ENCODE measurements at regions of chr2 and their contacts with region 1.

Region 1: GRCh38 chr2:128531856-128532255 is 213.2 kb upstream of the HS6ST1 start:
- DNase-seq: no peak
- ATAC-seq: no peak
- H3K4me3 ChIP-seq: no peak overlapping the region
- H3K27ac ChIP-seq: no peak overlapping the region
- H3K4me1 ChIP-seq: no peaks in the 10 kb centered on the region
- H3K27me3 ChIP-seq: no peaks in the 10 kb centered on the region

Region 2: DNA sequence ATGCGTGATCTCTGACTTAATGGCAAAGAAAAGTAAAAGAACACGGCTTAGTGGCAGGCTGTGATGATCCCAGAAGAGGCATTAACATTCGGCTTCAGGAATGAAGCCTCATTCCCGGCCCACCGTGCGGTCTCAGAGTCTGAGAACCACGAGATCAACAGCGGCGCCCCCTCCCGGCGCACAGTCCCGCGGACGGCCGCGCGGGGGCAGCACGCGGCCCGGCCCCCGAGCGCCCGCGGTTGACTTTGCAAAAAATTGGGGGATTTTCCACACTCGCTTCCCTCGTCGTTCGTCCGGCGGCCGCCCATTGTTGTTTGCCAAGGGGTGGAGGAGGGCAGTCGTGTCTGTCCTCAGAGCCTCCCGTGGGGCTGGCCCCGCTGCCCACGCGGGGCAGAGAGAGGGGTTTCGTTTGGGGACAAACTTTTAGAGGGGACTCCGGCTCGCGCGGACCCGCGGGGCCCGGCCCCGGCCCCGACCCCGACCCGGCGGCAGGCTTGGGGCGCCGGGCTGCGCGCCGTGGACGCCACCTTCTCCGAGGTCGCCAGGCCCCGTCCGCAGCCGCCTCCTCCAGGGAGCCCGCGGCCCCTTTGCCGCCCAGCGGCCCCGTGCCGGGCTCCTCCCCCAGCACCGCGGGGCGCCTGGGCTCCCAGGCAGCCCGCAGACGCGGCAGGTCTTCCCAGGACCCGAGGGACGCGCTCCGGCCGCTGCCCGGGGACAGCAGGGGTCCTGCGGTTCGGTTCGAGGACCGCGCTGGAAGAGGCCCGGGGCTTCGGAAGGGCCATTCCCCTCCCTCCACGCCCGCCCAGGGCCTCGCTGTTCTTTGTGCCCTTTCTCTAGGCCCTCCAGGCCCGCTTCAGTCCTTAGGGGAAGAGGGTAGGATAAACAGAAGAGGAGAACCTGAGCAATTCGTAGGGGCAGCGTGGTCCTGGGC is 209.8 kb before region 1 on chr2:
- intact Hi-C with region 1: loop called in 1 of 4 experiments (anchors 5 kb)
- DNase-seq: peak; percentile 86 to 95 (median 94)
- ATAC-seq: peak; percentile 66 to 75
- H3K4me3 ChIP-seq: peak overlapping the region; percentile 73
- H3K27ac ChIP-seq: peak overlapping the region; percentile 65
- H3K4me1 ChIP-seq: peaks cover under 1% of the 10 kb centered on the region
- H3K27me3 ChIP-seq: no peaks in the 10 kb centered on the region

Region 3: DNA sequence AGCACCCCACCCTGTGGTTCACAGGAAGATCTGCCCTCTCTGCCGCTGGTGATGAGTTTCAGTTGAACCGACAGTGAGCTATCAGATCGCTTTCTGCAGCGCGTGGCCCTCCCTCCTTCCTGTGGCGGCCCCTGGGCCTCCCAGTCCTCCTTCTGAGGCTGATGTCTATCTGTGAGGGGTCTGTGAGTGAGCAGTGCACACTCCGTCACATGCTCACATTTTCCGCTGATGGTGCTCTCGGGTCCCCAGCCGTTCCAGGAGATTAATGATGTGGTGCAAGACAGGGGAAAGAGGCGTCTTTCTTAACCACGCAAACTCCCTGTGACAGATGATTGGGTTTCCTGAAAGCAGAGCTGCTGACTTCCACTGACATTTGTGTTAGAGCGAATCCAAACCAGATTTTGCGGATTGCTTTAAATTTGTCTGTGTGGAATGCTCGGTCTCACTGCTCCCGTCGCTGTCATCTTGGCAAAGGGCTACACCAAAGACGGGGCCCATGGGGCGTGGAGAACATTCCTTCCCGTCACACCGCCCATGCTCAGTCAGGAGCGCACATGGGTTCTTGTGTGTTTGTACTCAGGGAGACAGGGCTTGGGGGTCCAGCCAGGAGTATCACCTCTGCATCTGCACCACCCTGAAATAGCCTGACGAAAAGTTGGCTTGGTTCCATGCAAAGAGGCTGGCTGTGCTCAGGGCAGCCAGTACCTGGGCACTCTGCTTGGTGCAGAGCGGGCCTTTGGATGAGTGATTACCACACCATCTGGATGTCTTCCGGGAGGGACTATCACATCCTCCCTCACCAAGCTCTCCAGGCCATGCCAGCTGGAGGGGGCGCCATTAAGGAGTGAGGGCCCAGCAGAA is 58.5 kb before region 1 on chr2:
- intact Hi-C with region 1: no loop called
- DNase-seq: peak; percentile 70 to 82 (median 76)
- ATAC-seq: peak; percentile 82 to 87
- H3K4me3 ChIP-seq: peak overlapping the region; percentile 19
- H3K27ac ChIP-seq: peak overlapping the region; percentile 20
- H3K4me1 ChIP-seq: peaks cover 2% of the 10 kb centered on the region
- H3K27me3 ChIP-seq: no peaks in the 10 kb centered on the region